PC-3 (cell line): ENCODE measurements at regions of chr1 and their contacts with region 1.

Region 1: GRCh38 chr1:150961799-150962198 is 12.8 kb downstream of the CERS2 start:
- DNase-seq: no peak
- ATAC-seq: no peak
- H3K4me3 ChIP-seq: no peak overlapping the region
- H3K27ac ChIP-seq: no peak overlapping the region
- H3K4me1 ChIP-seq: no peaks in the 10 kb centered on the region
- H3K27me3 ChIP-seq: no peaks in the 10 kb centered on the region
- CTCF ChIP-seq: no peak

Region 2: GRCh38 chr1:150493163-150493562 is 468.6 kb before region 1 on chr1:
- CTCF ChIA-PET with region 1: no interaction called
- POLR2A ChIA-PET with region 1: interaction called, 13 read pairs
- intact Hi-C with region 1: no loop called
- DNase-seq: peak; percentile 25
- ATAC-seq: no peak
- H3K4me3 ChIP-seq: no peak overlapping the region
- H3K27ac ChIP-seq: no peak overlapping the region
- H3K4me1 ChIP-seq: peaks cover 2% of the 10 kb centered on the region
- H3K27me3 ChIP-seq: no peaks in the 10 kb centered on the region
- CTCF ChIP-seq: no peak